ENCODE measurements at regions of chr6 and their contacts with region 1.

Region 1: GRCh38 chr6:135451693-135452092 is 45.8 kb downstream of the AHI1 start:
- DNase-seq: peak; percentile 57
- H3K4me3 Mint-ChIP-seq: no peak overlapping the region
- H3K27ac Mint-ChIP-seq: no peak overlapping the region
- H3K4me1 Mint-ChIP-seq: no peaks in the 10 kb centered on the region
- H3K27me3 Mint-ChIP-seq: no peaks in the 10 kb centered on the region
- CTCF ChIP-seq: peak; percentile 61

Region 2: DNA sequence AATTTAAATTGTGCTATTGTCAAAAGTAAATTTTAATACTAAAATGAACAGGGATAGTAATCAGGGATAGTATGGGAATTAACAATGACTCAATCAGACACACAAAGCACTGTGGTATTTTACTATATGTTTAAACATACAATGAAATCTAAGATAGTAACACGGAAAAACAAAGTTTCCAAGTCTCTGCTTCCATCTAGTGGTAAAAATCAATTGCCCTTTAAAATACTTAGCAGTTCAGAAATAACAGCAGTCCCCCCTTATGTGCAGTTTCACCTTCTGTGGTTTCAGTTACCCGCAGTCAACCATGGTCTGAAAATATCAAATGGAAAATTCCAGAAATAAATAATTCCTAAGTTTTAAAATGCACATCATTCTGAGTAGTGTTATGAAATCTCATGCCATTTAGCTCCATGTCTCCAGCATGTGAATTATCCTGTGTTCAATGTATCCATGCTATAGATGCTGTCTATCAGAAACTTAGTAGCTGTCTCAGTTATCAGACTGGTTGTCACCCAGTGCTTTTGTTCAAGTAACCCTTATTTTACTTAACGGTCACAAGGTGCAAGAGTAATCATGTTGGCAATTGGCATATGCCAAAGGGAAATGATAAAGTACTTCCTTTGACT is 12.7 kb before region 1 on chr6:
- CTCF ChIA-PET with region 1: interaction called, 11 read pairs
- POLR2A ChIA-PET with region 1: no interaction called
- intact Hi-C with region 1: no loop called
- DNase-seq: peak; percentile 28
- H3K4me3 Mint-ChIP-seq: no peak overlapping the region
- H3K27ac Mint-ChIP-seq: no peak overlapping the region
- H3K4me1 Mint-ChIP-seq: no peaks in the 10 kb centered on the region
- H3K27me3 Mint-ChIP-seq: no peaks in the 10 kb centered on the region
- CTCF ChIP-seq: peak; percentile 42

Measured in MCF 10A (cell line).